B cell (primary cell): ENCODE measurements at regions of chr1 and their contacts with region 1.

Region 1: DNA sequence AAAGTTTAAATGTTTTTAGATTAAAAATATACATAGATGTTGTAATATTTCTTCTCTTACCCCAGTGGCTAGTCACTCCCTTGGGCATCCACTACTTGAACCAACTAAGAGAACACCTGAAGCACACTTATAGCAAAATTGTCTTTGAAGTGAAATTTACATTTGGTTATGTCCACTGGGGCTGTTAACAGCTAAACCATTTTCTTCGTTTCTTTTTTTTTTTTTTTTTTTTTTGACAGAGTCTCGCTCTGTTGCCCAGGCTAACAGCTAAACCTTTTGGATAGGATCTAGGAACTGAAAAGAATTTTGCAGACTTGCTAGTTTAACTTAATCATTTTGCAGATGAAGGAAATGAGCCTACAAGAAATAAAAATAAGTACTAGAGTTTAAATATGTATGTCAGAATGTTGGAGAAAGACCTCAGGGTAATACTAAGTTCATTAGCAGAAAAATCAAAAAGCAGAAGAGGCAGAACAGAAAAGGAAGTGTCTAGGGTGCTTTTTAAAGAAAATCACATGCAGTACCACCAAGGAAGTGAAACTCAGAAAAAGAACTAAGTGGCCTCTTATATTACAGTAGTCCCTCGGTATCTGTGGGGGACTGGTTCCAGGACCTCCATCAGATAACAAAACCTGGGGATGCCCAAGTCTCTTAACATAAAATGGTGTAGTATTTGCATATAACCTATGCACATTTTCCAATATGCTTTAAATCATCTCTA is 11.8 kb downstream of the DRAM2 start:
- DNase-seq: peak; percentile 88
- ATAC-seq: peak; percentile 88
- H3K4me3 ChIP-seq: peak overlapping the region in 3 of 5 experiments; percentile 26 to 58 (median 31)
- H3K4me3 Mint-ChIP-seq: peak overlapping the region; percentile 36
- H3K27ac ChIP-seq: peak overlapping the region; percentile 95 to 98
- H3K27ac Mint-ChIP-seq: peak overlapping the region; percentile 72
- H3K4me1 ChIP-seq: peaks cover 79 to 93% of the 10 kb centered on the region in 2 donors
- H3K4me1 Mint-ChIP-seq: peaks cover 83% of the 10 kb centered on the region
- H3K27me3 ChIP-seq: no peaks in the 10 kb centered on the region
- H3K27me3 Mint-ChIP-seq: no peaks in the 10 kb centered on the region
- CTCF ChIP-seq: no peak

Region 2: GRCh38 chr1:110674337-110675059 is 453.6 kb before region 1 on chr1 and contains the start of gene KCNA3:
- CTCF ChIA-PET with region 1: no interaction called
- POLR2A ChIA-PET with region 1: no interaction called
- intact Hi-C with region 1: loop called (anchors 10 kb)
- DNase-seq: peak; percentile 79
- ATAC-seq: peak; percentile 59
- H3K4me3 ChIP-seq: peak within 1 kb of the TSS in 4 of 5 experiments; percentile 50 to 67 (median 62)
- H3K4me3 Mint-ChIP-seq: peak within 1 kb of the TSS; percentile 84
- H3K27ac ChIP-seq: peak within 1 kb of the TSS; percentile 68 to 76
- H3K27ac Mint-ChIP-seq: peak within 1 kb of the TSS; percentile 81
- H3K4me1 ChIP-seq: peaks cover 38 to 43% of the 10 kb centered on the region in 2 donors
- H3K4me1 Mint-ChIP-seq: peaks cover 54% of the 10 kb centered on the region
- H3K27me3 ChIP-seq: no peaks in the 10 kb centered on the region
- H3K27me3 Mint-ChIP-seq: no peaks in the 10 kb centered on the region
- CTCF ChIP-seq: peak; percentile 48
- total RNA-seq, gene KCNA3: 60.0 and 62.5 TPM in 2 replicates

Region 3: DNA sequence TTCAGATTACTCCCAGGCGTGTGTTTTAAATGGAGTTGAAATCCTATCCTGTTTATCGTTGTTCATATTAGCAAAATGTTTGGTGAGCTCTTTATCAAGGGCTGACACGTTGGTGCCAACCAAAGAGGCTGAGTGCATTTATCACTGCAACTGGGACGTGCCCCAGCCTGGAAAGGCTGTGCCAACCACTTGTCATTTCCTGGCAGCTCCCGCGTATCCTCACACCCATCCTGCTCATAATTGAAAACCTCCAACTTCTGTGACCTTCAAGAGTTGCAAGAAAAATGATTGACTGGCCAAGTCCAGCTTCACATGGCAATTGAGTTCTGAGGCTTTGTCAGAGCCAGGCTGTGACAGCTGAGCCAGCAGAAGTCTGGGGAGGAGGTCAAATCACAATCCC is 409.6 kb before region 1 on chr1:
- CTCF ChIA-PET with region 1: no interaction called
- POLR2A ChIA-PET with region 1: no interaction called
- intact Hi-C with region 1: no loop called
- DNase-seq: no peak
- ATAC-seq: no peak
- H3K4me3 ChIP-seq: no peak overlapping the region
- H3K4me3 Mint-ChIP-seq: no peak overlapping the region
- H3K27ac ChIP-seq: no peak overlapping the region
- H3K27ac Mint-ChIP-seq: no peak overlapping the region
- H3K4me1 ChIP-seq: no peaks in the 10 kb centered on the region
- H3K4me1 Mint-ChIP-seq: no peaks in the 10 kb centered on the region
- H3K27me3 ChIP-seq: no peaks in the 10 kb centered on the region
- H3K27me3 Mint-ChIP-seq: peaks cover 5% of the 10 kb centered on the region
- CTCF ChIP-seq: no peak

Region 4: DNA sequence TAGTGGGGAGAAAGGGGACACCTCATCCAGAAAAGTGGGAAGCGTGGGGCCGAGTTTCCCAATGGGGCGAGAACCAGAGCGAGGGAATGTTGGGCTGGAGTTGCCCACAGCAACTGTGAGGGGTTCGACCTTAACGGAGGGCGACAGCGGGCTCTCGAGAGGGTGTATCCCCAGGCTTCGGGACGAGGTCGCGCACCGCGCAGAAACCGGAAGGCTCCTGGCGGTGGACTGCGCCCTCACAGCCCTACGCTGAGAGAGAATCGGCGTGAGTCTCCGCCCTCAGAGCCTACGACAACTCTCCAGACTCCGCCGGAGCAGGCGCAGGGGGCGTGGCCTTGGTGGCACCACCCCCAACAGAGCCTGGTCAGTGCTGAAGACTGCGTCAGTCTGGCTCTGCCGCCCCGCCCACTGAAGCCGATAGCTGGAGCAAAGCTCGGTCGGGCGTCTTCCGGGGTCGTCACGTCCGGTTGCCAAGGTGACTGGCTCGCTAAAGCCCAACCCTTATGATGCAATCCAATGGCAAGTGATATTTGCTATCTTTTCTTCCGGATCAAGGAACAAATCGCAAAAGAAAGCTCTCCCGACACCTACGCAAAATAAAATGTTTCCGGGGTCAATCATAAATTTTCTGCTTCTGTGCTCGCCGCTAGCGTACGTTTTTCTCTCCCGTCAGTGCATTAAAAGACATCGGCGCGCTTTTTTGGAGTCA is 164.2 kb before region 1 on chr1 and contains the start of gene LRIF1:
- CTCF ChIA-PET with region 1: no interaction called
- POLR2A ChIA-PET with region 1: no interaction called
- intact Hi-C with region 1: loop called (anchors 5 kb)
- DNase-seq: peak; percentile 100
- ATAC-seq: peak; percentile 96
- H3K4me3 ChIP-seq: peak within 1 kb of the TSS; percentile 62 to 98 (median 82)
- H3K4me3 Mint-ChIP-seq: peak within 1 kb of the TSS; percentile 83
- H3K27ac ChIP-seq: peak within 1 kb of the TSS; percentile 95 to 98
- H3K27ac Mint-ChIP-seq: peak within 1 kb of the TSS; percentile 88
- H3K4me1 ChIP-seq: peaks cover 20 to 21% of the 10 kb centered on the region in 2 donors
- H3K4me1 Mint-ChIP-seq: peaks cover 30% of the 10 kb centered on the region
- H3K27me3 ChIP-seq: peaks cover 0 to 13% (median 7%) of the 10 kb centered on the region in 4 experiments
- H3K27me3 Mint-ChIP-seq: peaks cover 10% of the 10 kb centered on the region
- CTCF ChIP-seq: peak; percentile 60
- total RNA-seq, gene LRIF1: 22.6 and 26.5 TPM in 2 replicates

Region 5: GRCh38 chr1:111161843-111162487 is 33.9 kb after region 1 on chr1:
- CTCF ChIA-PET with region 1: no interaction called
- POLR2A ChIA-PET with region 1: no interaction called
- intact Hi-C with region 1: loop called (anchors 5 kb)
- DNase-seq: no peak
- ATAC-seq: no peak
- H3K4me3 ChIP-seq: no peak overlapping the region
- H3K4me3 Mint-ChIP-seq: no peak overlapping the region
- H3K27ac ChIP-seq: peak overlapping the region in 1 of 2 donors; percentile 59
- H3K27ac Mint-ChIP-seq: peak overlapping the region; percentile 67
- H3K4me1 ChIP-seq: peaks cover 0 to 8% of the 10 kb centered on the region in 2 donors
- H3K4me1 Mint-ChIP-seq: peaks cover 34% of the 10 kb centered on the region
- H3K27me3 ChIP-seq: no peaks in the 10 kb centered on the region
- H3K27me3 Mint-ChIP-seq: no peaks in the 10 kb centered on the region
- CTCF ChIP-seq: no peak

Region 6: GRCh38 chr1:111176678-111177077 is 48.6 kb after region 1 on chr1:
- CTCF ChIA-PET with region 1: no interaction called
- POLR2A ChIA-PET with region 1: no interaction called
- intact Hi-C with region 1: no loop called
- DNase-seq: peak; percentile 34
- ATAC-seq: no peak
- H3K4me3 ChIP-seq: no peak overlapping the region
- H3K4me3 Mint-ChIP-seq: peak overlapping the region; percentile 13
- H3K27ac ChIP-seq: peak overlapping the region in 1 of 2 donors; percentile 43
- H3K27ac Mint-ChIP-seq: peak overlapping the region; percentile 32
- H3K4me1 ChIP-seq: peaks cover 9 to 28% of the 10 kb centered on the region in 2 donors
- H3K4me1 Mint-ChIP-seq: peaks cover 51% of the 10 kb centered on the region
- H3K27me3 ChIP-seq: no peaks in the 10 kb centered on the region
- H3K27me3 Mint-ChIP-seq: no peaks in the 10 kb centered on the region
- CTCF ChIP-seq: no peak